AG04450 (cell line): ENCODE measurements at regions of chr7 and their contacts with region 1.

Region 1: GRCh38 chr7:2353113-2353935 is 1.3 kb upstream of the EIF3B start:
- DNase-seq: no peak
- H3K4me3 ChIP-seq: peak overlapping the region; percentile 89
- H3K27ac ChIP-seq: no peak overlapping the region
- H3K27me3 ChIP-seq: no peaks in the 10 kb centered on the region
- CTCF ChIP-seq: no peak

Region 2: DNA sequence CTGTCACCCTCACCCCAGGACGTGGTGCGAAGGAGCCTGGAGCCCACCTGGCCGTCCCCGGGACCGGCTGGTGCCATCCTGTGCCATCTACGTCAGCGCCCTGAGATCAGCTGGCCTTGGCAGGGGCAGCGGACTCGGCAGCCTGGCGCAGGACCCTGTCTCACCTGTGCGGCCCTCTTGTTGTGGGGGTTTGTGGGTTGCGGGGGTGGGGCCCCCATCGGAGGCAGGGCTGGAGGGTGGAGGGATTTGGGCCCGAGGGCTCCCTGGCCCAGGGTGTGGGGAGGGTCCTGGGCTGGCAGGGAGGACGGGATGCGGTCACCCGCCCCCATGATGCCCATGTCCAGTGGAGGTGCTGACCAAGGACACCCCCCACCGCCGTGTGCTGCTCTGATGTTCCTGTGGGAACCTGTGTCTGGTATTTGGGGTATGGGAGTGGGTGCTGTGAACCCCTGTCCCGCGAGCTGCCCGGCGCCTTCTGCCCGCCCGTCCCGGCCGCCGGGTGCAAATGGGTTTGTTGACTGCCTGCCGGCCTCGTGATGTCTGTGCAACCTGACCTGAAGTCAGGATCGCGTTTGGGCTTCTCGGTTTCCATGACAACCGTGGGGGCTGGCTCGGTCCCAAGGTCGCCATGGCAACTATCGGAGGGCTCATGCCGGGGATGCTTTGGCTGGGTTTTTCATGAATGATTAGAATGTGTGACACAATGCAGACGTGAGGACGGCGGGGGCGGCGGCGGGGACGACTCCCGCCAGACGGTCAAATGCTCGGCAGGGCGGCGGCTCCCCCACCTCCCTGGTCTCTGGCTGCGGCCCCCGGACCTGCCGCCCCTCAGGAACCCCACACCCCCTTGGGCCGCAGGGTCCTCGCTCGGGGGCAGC is 815.5 kb before region 1 on chr7:
- CTCF ChIA-PET with region 1: interaction called, 11 read pairs
- POLR2A ChIA-PET with region 1: no interaction called
- DNase-seq: peak; percentile 92
- H3K4me3 ChIP-seq: peak overlapping the region; percentile 65
- H3K27ac ChIP-seq: peak overlapping the region; percentile 100
- H3K27me3 ChIP-seq: no peaks in the 10 kb centered on the region
- CTCF ChIP-seq: no peak

Region 3: DNA sequence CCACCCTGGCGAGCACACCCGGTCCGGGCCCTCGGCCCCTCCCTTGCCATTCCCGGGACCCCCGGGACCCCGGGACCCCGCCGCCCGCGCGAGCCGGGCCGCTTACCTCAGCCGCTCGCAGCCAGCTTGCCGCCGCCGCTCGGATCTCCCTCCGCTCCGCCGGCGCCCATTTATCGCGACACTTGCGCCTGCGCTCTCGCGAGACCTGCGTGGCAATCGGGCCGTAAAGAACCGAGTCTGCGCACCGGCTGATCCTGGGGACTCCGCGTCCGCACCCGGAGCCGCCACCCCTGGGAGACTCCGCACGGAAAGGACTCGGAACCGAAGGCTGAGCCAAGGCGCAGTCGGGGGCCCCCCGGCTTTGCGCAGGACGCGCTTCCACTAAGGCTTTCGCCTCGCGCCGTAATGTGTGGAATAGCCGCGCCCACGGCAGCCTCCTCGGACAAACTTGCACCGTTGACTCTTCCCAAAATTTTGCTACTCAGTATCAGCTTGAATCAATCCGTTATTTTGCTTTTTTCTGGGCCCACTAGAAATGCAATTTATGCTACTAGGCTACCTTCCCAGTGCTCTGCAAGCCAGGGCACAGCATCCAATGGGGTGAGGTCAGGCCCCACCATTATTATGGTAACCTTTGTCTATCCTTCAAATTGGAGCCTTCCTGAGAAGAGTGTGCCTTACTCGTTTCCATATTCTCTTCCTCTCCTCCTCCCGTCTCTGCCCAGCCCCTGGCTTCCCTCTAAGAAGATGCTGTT is 120.4 kb before region 1 on chr7 and contains the start of gene MAD1L1:
- CTCF ChIA-PET with region 1: interaction called, 10 read pairs
- POLR2A ChIA-PET with region 1: no interaction called
- DNase-seq: peak; percentile 78
- H3K4me3 ChIP-seq: peak within 1 kb of the TSS; percentile 77
- H3K27ac ChIP-seq: peak within 1 kb of the TSS; percentile 39
- H3K27me3 ChIP-seq: no peaks in the 10 kb centered on the region
- CTCF ChIP-seq: no peak
- polyA plus RNA-seq, gene MAD1L1: 11.9 and 13.5 TPM in 2 replicates

Region 4: DNA sequence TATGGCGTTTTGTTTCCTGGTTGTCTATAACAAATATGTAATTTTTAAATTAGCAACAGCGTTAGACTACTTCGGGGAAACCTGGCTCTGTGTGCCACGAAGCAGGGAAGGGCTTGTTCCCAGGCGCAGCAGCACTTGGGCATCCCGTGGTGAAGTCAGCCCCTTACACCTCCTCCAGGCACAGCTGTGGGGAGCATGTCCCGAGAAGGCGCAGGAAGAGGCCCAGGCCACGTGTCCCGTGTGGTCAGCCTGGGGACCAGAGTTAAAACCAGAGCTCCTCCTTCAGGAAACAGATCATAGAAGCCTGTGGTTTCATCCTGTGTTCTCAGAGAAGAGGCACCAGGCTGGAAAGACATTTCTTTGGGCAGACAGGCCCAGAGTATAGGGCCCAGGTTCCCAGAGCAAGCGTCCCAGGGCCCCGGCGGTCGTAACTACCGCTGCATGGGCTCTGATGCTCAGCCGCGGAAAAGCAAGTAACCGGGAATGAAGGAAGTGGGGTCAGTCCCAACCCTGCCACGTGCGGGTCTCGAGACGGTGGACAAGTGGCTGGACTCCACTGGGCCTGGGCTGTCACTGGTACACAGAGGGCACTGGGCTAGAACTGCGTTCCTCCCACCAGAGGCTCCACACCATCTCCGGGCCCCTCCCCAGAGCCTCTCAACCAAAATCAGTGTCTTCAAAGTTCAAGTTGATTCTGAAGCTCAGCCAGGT is 104.2 kb before region 1 on chr7:
- CTCF ChIA-PET with region 1: interaction called, 29 read pairs
- POLR2A ChIA-PET with region 1: interaction called, 5 read pairs
- DNase-seq: peak; percentile 89
- H3K4me3 ChIP-seq: no peak overlapping the region; the same call in 1 of the 2 replicates
- H3K27ac ChIP-seq: peak overlapping the region; percentile 99
- H3K27me3 ChIP-seq: no peaks in the 10 kb centered on the region
- CTCF ChIP-seq: no peak

Region 5: DNA sequence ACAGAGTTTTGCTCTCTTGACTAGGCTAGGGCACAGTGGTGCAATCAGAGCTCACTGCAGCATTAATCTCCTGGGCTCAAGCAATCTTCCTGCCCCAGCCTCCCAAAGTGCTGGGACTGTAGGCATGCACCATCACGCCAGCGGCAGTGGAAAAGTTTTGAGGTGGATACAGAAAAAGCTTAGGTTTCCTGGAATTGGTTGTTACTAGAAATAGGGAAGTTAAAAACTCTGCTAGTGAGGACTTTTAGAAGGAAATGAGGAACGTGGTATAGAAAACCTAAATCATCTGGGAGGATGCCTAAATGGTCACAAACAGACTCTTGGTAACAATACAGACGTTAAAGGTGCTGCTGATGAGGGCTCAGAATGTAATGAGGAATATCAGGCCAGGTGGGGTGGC is 28.2 kb before region 1 on chr7:
- CTCF ChIA-PET with region 1: interaction called, 13 read pairs
- POLR2A ChIA-PET with region 1: no interaction called
- DNase-seq: no peak
- H3K4me3 ChIP-seq: no peak overlapping the region
- H3K27ac ChIP-seq: no peak overlapping the region
- H3K27me3 ChIP-seq: no peaks in the 10 kb centered on the region
- CTCF ChIP-seq: no peak